GM10248 (cell line): ENCODE measurements at regions of chr16 and their contacts with region 1.

Region 1: GRCh38 chr16:69867784-69868551 is 83.2 kb upstream of the CLEC18A start:
- DNase-seq: no peak
- CTCF ChIP-seq: no peak

Region 2: GRCh38 chr16:69880640-69881133 is 12.7 kb after region 1 on chr16:
- CTCF ChIA-PET with region 1: interaction called, 10 read pairs
- POLR2A ChIA-PET with region 1: no interaction called
- DNase-seq: no peak
- CTCF ChIP-seq: no peak

Region 3: GRCh38 chr16:69894676-69895075 is 26.7 kb after region 1 on chr16:
- CTCF ChIA-PET with region 1: no interaction called
- POLR2A ChIA-PET with region 1: no interaction called
- DNase-seq: no peak
- CTCF ChIP-seq: no peak